Cardiac septum (tissue), 1 donor: ENCODE measurements at regions of chr18 and their contacts with region 1.

Region 1: DNA sequence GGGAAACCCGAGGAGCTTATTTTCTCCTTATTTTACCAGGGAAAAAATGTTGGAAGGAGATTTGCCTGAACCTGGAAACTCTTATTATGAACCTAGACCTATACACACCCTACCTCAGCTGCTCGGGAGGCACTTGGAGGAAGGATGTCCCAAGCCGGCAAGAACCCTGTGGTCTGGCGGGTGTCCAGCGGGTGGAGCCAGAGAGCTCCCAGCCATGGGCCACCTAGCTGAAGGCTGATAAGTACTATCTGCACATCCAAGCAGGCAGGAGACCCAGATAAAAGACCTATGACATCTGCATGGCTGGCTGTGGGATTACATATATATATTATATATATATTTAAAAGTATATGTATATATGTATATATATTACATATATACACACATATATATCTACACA is 1.1 kb upstream of the SLC14A1 start:
- DNase-seq: peak; percentile 88

Region 2: DNA sequence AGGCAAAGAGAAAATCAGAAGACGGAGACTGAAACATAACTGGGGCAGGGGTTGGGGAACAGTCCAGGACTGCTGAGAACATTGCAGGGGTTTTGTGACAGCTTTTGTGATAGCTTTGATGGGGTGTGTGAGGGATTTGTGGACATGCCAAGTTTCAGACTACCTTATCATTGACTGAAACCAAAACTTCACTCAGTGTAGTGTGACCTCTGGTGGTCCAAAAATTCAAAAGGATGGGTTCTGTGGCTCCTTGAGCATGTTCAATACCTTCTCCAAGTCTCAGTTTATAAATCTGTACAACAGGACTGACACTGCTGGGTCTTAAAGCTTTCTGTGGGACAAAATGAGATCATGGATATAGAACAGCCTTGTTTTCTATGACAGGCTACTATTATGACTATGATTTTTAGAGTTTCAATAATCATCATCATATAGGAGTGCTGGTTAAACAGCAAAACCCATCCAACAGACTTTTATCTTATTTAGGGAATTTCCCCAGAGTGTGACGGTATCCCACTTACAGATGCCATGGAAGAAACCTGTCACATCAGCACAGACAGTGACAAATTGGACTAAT is 366.9 kb before region 1 on chr18:
- intact Hi-C with region 1: no loop called
- DNase-seq: no peak

Region 3: DNA sequence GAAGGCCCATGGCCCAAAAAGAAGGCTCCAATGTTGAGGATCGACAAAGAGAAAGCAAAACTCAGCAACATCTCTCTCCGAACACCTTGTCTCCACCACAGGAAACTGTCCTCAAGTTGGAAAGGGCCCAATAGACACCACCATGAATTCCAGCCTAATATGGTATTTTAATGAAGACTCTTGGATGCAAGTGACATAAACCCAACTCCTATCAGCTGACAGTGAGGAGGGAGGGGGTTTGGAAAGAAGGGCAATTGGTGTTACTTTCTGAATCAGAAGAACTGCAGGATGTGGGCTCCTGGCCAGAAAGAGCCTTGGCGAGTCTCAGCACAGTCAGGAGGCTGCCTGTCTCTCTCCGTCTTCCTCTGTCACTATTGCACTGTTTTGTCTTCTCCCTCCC is 62.2 kb after region 1 on chr18:
- intact Hi-C with region 1: loop called (anchors 10 kb)
- DNase-seq: no peak

Region 4: DNA sequence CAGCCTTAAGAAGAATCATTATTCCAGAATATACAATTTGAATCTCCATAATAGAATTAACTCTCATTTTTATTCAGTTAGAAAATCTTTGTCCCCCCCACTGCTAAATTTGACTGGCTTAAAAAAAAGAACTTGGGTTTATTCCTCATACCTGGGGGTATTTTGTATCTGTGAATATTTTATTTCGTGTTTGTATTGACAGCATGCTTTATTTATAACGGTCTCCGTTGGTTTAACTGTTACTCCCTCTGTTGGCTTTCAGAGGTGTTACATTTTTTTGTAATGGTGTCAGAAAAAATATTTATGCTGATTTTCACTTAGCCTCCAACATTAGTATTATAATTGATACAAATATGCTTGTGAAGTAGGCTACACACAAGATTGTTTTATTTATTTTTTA is 490.4 kb after region 1 on chr18:
- intact Hi-C with region 1: no loop called
- DNase-seq: no peak